ENCODE measurements at regions of chr1 and their contacts with region 1.

Region 1: GRCh38 chr1:221777431-221778072 is 35.7 kb upstream of the DUSP10 start:
- DNase-seq: peak in 7 of 9 donors; percentile 14 to 58 (median 32)
- ATAC-seq: peak; percentile 79
- H3K4me3 ChIP-seq: peak overlapping the region; percentile 19
- H3K4me3 Mint-ChIP-seq: peak overlapping the region; percentile 1 to 82 (median 56)
- H3K27ac ChIP-seq: no peak overlapping the region
- H3K27ac Mint-ChIP-seq: peak overlapping the region; percentile 56 to 90 (median 74)
- H3K4me1 ChIP-seq: peaks cover 37 to 38% of the 10 kb centered on the region in 2 donors
- H3K4me1 Mint-ChIP-seq: peaks cover 40 to 83% (median 51%) of the 10 kb centered on the region in 7 donors
- H3K27me3 ChIP-seq: no peaks in the 10 kb centered on the region
- H3K27me3 Mint-ChIP-seq: no peaks in the 10 kb centered on the region

Region 2: DNA sequence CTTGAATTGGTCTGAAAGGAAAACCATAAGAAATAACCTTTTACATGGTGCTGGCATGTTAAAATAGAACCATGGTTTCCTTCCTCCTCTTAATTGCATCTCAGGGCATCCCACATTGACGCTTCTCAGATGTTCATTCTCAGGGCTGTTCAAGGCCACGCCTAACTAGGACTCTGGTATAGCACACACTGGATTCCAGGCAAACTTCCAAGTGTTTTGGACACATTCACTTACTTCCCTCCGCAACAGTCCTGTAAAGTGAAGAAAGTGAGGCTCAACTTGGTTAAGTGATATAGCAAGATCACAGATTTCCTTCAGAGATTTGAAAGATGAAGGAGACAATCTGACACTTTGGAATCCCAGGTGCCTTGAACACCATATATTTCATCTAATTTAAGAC is 280.5 kb before region 1 on chr1:
- CTCF ChIA-PET with region 1: no interaction called
- POLR2A ChIA-PET with region 1: no interaction called
- intact Hi-C with region 1: no loop called
- DNase-seq: no peak
- ATAC-seq: no peak
- H3K4me3 ChIP-seq: no peak overlapping the region
- H3K4me3 Mint-ChIP-seq: no peak overlapping the region
- H3K27ac ChIP-seq: no peak overlapping the region
- H3K27ac Mint-ChIP-seq: no peak overlapping the region
- H3K4me1 ChIP-seq: no peaks in the 10 kb centered on the region
- H3K4me1 Mint-ChIP-seq: peaks cover 0 to 1% (median 0%) of the 10 kb centered on the region in 7 donors
- H3K27me3 ChIP-seq: no peaks in the 10 kb centered on the region
- H3K27me3 Mint-ChIP-seq: peaks cover 0 to 7% (median 0%) of the 10 kb centered on the region in 5 donors

Region 3: DNA sequence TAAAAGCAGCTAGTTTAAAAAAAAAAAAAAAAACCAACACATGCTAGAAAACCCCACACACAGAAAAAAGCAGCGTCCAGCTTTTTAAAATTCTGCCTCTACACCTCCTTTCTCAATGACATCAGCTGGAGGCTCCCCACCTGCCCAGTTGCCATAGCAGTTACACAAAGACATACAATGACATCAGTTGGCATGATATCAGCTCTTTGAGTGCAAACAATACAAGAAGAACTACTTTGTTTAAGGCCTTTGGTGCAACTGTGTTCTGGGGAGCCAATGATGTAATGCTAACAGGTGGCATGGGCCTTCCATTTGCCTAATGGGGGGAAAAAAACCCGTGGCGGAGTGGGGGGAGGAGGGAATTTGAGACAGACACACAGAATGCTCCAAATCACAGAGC is 68.6 kb before region 1 on chr1:
- CTCF ChIA-PET with region 1: interaction called, 3 read pairs
- POLR2A ChIA-PET with region 1: no interaction called
- intact Hi-C with region 1: loop called (anchors 1 to 2 kb)
- DNase-seq: peak in 6 of 9 donors; percentile 27 to 86 (median 53)
- ATAC-seq: peak; percentile 63
- H3K4me3 ChIP-seq: no peak overlapping the region
- H3K4me3 Mint-ChIP-seq: peak overlapping the region in 3 of 10 donors; percentile 6 to 20 (median 15)
- H3K27ac ChIP-seq: no peak overlapping the region
- H3K27ac Mint-ChIP-seq: peak overlapping the region; percentile 14 to 81 (median 68)
- H3K4me1 ChIP-seq: peaks cover 20 to 58% of the 10 kb centered on the region in 2 donors
- H3K4me1 Mint-ChIP-seq: peaks cover 30 to 72% (median 57%) of the 10 kb centered on the region in 7 donors
- H3K27me3 ChIP-seq: no peaks in the 10 kb centered on the region
- H3K27me3 Mint-ChIP-seq: no peaks in the 10 kb centered on the region

Region 4: GRCh38 chr1:221794079-221794670 is 16.6 kb after region 1 on chr1:
- CTCF ChIA-PET with region 1: no interaction called
- POLR2A ChIA-PET with region 1: no interaction called
- intact Hi-C with region 1: loop called (anchors 1 to 2 kb)
- DNase-seq: peak in 1 of 9 donors; percentile 35
- ATAC-seq: peak; percentile 84
- H3K4me3 ChIP-seq: no peak overlapping the region
- H3K4me3 Mint-ChIP-seq: peak overlapping the region in 2 of 10 donors; percentile 6 to 47
- H3K27ac ChIP-seq: no peak overlapping the region
- H3K27ac Mint-ChIP-seq: peak overlapping the region in 4 of 9 donors; percentile 6 to 66 (median 24)
- H3K4me1 ChIP-seq: peaks cover 0 to 13% of the 10 kb centered on the region in 2 donors
- H3K4me1 Mint-ChIP-seq: peaks cover 0 to 31% (median 0%) of the 10 kb centered on the region in 7 donors
- H3K27me3 ChIP-seq: no peaks in the 10 kb centered on the region
- H3K27me3 Mint-ChIP-seq: no peaks in the 10 kb centered on the region

Region 5: DNA sequence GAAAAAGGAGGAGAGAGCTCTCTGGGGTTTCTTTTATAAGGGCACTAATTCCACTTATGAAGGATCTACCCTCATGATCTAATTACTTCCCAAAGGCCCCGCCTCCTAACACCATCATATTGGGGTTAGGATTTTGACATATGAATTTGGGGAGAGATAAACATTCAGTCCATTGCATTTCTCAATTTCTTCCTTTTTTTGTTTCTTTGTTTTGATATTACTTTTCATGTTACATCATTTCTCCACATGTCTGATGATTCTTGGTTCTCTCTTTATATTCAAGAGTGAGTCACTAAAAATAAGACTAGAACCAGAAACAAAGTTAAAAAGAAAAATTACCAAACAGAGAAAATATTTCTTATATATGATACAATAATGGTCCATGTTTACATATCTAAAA is 27.6 kb after region 1 on chr1:
- CTCF ChIA-PET with region 1: no interaction called
- POLR2A ChIA-PET with region 1: no interaction called
- intact Hi-C with region 1: no loop called
- DNase-seq: no peak
- ATAC-seq: no peak
- H3K4me3 ChIP-seq: no peak overlapping the region
- H3K4me3 Mint-ChIP-seq: no peak overlapping the region
- H3K27ac ChIP-seq: no peak overlapping the region
- H3K27ac Mint-ChIP-seq: no peak overlapping the region
- H3K4me1 ChIP-seq: peaks cover 8 to 12% of the 10 kb centered on the region in 2 donors
- H3K4me1 Mint-ChIP-seq: peaks cover 4 to 32% (median 15%) of the 10 kb centered on the region in 7 donors
- H3K27me3 ChIP-seq: no peaks in the 10 kb centered on the region
- H3K27me3 Mint-ChIP-seq: peaks cover 0 to 4% (median 0%) of the 10 kb centered on the region in 5 donors

Region 6: GRCh38 chr1:221839796-221840395 is 62.3 kb after region 1 on chr1:
- CTCF ChIA-PET with region 1: no interaction called
- POLR2A ChIA-PET with region 1: no interaction called
- intact Hi-C with region 1: loop called in 1 of 2 experiments (anchors 2 kb)
- DNase-seq: peak in 1 of 9 donors; percentile 55
- ATAC-seq: peak; percentile 89
- H3K4me3 ChIP-seq: no peak overlapping the region
- H3K4me3 Mint-ChIP-seq: peak overlapping the region in 1 of 10 donors; percentile 32
- H3K27ac ChIP-seq: no peak overlapping the region
- H3K27ac Mint-ChIP-seq: peak overlapping the region in 3 of 9 donors; percentile 38 to 49 (median 46)
- H3K4me1 ChIP-seq: peaks cover 0 to 17% of the 10 kb centered on the region in 2 donors
- H3K4me1 Mint-ChIP-seq: peaks cover 9 to 58% (median 13%) of the 10 kb centered on the region in 7 donors
- H3K27me3 ChIP-seq: no peaks in the 10 kb centered on the region
- H3K27me3 Mint-ChIP-seq: peaks cover 0 to 9% (median 4%) of the 10 kb centered on the region in 5 donors

Region 7: GRCh38 chr1:222643938-222644635 is 866.5 kb after region 1 on chr1:
- CTCF ChIA-PET with region 1: no interaction called
- POLR2A ChIA-PET with region 1: no interaction called
- intact Hi-C with region 1: loop called in 1 of 2 experiments (anchors 1 kb)
- DNase-seq: peak; percentile 93 to 98 (median 96)
- ATAC-seq: peak; percentile 97
- H3K4me3 ChIP-seq: peak overlapping the region; percentile 99
- H3K4me3 Mint-ChIP-seq: peak overlapping the region; percentile 87 to 99 (median 97)
- H3K27ac ChIP-seq: peak overlapping the region; percentile 92
- H3K27ac Mint-ChIP-seq: peak overlapping the region; percentile 95 to 99 (median 98)
- H3K4me1 ChIP-seq: peaks cover 12% of the 10 kb centered on the region in 2 donors
- H3K4me1 Mint-ChIP-seq: peaks cover 12 to 59% (median 49%) of the 10 kb centered on the region in 7 donors
- H3K27me3 ChIP-seq: no peaks in the 10 kb centered on the region
- H3K27me3 Mint-ChIP-seq: no peaks in the 10 kb centered on the region